Activated CD4-positive, alpha-beta T cell treated with anti-CD3 and anti-CD28 coated beads for 36 hours (primary cell): ENCODE measurements at regions of chr10 and their contacts with region 1.

Region 1: DNA sequence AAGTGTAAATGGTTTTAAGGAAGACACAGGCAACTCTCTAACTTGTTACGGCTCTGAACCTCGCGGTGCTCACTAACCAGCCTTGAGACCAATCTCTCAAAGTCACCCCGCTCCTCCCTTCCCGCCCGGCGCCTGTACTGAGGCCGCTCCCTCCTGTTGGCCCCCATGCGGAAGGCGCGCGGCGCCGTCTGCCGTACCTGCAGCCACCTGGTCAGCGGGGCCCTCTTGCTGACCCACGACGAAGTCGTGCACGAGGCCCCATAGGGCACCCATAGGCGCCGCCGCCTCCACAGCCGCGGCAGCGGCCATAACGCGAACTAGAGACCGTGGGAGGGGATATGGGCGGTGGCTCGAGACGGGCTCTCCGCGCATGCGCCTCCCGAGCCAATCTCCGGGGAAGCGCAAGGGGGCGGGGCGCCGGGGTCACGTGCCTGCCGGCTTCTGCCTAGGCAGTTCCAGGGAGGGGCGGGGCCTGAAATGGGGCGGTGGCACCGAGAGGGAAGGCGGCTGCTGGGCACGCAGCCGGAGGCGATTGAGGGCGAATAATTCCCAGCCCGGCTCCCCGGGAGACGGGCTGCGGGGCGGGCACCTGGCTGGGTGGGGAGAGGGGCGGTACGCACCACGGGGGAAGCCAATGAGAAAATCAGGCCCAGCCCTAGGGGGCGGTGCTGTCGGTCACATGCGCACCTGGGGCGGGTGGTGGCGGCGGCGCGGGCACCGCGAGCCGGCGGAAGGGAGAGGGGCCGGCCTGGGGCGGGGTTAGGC is at the start of gene MMS19:
- DNase-seq: peak; percentile 100
- ATAC-seq: peak; percentile 91
- H3K4me3 Mint-ChIP-seq: peak within 1 kb of the TSS; percentile 87
- H3K27ac Mint-ChIP-seq: peak within 1 kb of the TSS; percentile 97
- H3K4me1 Mint-ChIP-seq: peaks cover 38% of the 10 kb centered on the region
- H3K27me3 Mint-ChIP-seq: peaks cover 20% of the 10 kb centered on the region
- total RNA-seq, gene MMS19: 91.3 to 107 TPM

Region 2: GRCh38 chr10:97292097-97292862 is 206.0 kb before region 1 on chr10 and contains the start of gene ARHGAP19:
- CTCF ChIA-PET with region 1: no interaction called
- POLR2A ChIA-PET with region 1: no interaction called
- intact Hi-C with region 1: loop called (anchors 1 kb)
- DNase-seq: peak; percentile 97
- ATAC-seq: peak; percentile 99
- H3K4me3 Mint-ChIP-seq: peak within 1 kb of the TSS; percentile 93
- H3K27ac Mint-ChIP-seq: peak within 1 kb of the TSS; percentile 87
- H3K4me1 Mint-ChIP-seq: peaks cover 20% of the 10 kb centered on the region
- H3K27me3 Mint-ChIP-seq: peaks cover 2% of the 10 kb centered on the region
- total RNA-seq, gene ARHGAP19: 55.9 to 70.2 TPM

Region 3: DNA sequence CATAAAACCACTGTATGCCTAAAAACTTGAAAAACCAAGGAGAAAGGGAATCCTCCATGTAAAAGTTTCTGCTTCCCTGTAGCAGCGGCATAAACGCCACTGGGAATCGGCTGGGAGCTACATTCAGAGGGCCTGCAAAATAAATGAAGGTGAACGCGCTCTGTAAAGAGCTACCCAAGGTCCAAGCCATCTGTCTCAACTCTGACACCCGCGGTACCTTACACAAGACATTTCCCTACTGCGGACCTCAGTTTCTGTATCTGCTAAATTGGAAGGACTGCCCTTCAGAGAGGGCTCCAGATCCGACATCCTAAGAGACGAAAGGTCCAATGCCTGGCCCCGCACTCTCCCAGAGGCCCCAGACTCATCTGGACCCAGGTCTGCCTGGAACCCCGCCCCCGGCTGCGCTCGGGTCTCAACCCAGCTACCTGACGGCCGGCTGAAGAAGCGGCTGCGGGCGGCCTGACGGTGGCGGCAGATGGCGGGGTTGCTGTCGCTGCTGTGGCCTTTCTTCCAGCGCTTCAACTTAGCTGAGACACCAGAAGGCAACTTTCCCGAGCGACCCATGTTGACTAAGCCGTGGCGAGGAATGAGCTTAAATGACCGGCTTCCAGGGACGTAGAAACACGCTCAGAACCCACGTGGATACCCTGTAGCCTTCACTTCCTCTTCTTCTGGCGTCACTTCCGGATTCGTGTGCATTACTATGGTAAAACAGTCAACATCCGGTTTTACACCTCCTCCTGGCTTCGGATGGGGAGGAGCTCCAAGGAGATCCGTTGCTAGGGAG is 97.4 kb before region 1 on chr10 and contains the start of gene RRP12:
- CTCF ChIA-PET with region 1: interaction called, 5 read pairs
- POLR2A ChIA-PET with region 1: interaction called, 4 read pairs
- intact Hi-C with region 1: loop called (anchors 1 kb)
- DNase-seq: peak; percentile 89
- ATAC-seq: peak; percentile 99
- H3K4me3 Mint-ChIP-seq: peak within 1 kb of the TSS; percentile 96
- H3K27ac Mint-ChIP-seq: peak within 1 kb of the TSS; percentile 85
- H3K4me1 Mint-ChIP-seq: peaks cover 7% of the 10 kb centered on the region
- H3K27me3 Mint-ChIP-seq: no peaks in the 10 kb centered on the region
- total RNA-seq, gene RRP12: 45.9 to 49.4 TPM

Region 4: GRCh38 chr10:97543025-97543575 is 44.8 kb after region 1 on chr10:
- CTCF ChIA-PET with region 1: no interaction called
- POLR2A ChIA-PET with region 1: no interaction called
- intact Hi-C with region 1: loop called (anchors 1 to 2 kb)
- DNase-seq: peak; percentile 85
- ATAC-seq: peak; percentile 94
- H3K4me3 Mint-ChIP-seq: no peak overlapping the region
- H3K27ac Mint-ChIP-seq: peak overlapping the region; percentile 75
- H3K4me1 Mint-ChIP-seq: peaks cover 22% of the 10 kb centered on the region
- H3K27me3 Mint-ChIP-seq: no peaks in the 10 kb centered on the region

Region 5: GRCh38 chr10:97686962-97687784 is 188.9 kb after region 1 on chr10 and contains the start of gene AVPI1:
- CTCF ChIA-PET with region 1: interaction called, 3 read pairs
- POLR2A ChIA-PET with region 1: interaction called, 3 read pairs
- intact Hi-C with region 1: loop called (anchors 1 to 2 kb)
- DNase-seq: peak; percentile 97
- ATAC-seq: peak; percentile 91
- H3K4me3 Mint-ChIP-seq: peak within 1 kb of the TSS; percentile 76
- H3K27ac Mint-ChIP-seq: peak within 1 kb of the TSS; percentile 51
- H3K4me1 Mint-ChIP-seq: peaks cover 17% of the 10 kb centered on the region
- H3K27me3 Mint-ChIP-seq: no peaks in the 10 kb centered on the region
- total RNA-seq, gene AVPI1: 2.1 to 2.2 TPM

Region 6: DNA sequence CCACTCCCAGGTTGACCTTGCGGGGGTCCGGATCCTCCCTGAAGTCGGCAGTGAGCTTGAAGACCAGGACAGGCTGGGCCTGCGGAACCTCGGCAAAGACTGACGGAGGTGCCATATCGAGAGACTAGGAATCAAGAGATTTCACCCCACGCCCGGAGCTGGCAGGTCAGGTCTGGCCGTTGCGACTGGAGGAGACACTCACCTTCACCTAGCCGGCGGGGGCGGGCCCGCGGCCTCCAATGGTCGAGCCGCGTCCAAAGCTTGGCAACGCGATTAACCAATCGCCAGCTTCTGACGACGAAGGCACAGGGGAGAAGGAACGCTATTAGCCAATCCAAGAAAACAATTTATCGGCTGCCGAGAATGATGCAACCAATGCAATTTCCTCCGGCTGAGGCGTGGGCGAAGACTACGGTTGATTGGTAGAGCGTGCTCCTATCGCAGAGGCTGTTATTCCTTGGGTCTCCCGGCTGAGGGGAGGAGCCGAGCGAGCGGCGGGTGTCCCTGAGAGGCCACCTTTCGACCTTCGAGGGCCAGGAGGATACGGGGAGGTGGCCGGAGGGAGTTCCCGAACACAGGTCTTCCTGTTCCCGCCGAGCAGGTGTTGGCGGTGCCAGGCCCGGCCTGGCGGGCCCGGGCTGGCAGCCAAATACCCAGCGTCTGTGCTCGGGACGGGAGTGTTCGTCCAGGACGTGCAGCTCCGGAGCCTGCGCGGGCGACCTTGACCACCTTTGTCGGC is 1932.4 kb after region 1 on chr10 and contains the start of gene GOT1:
- CTCF ChIA-PET with region 1: no interaction called
- POLR2A ChIA-PET with region 1: no interaction called
- intact Hi-C with region 1: loop called in 1 of 2 experiments (anchors 5 kb)
- DNase-seq: peak; percentile 97
- ATAC-seq: peak; percentile 96
- H3K4me3 Mint-ChIP-seq: peak within 1 kb of the TSS; percentile 94
- H3K27ac Mint-ChIP-seq: peak within 1 kb of the TSS; percentile 98
- H3K4me1 Mint-ChIP-seq: peaks cover 32% of the 10 kb centered on the region
- H3K27me3 Mint-ChIP-seq: no peaks in the 10 kb centered on the region
- total RNA-seq, gene GOT1: 51.7 to 83.5 TPM